PC-3 (cell line): ENCODE measurements at regions of chr16 and their contacts with region 1.

Region 1: DNA sequence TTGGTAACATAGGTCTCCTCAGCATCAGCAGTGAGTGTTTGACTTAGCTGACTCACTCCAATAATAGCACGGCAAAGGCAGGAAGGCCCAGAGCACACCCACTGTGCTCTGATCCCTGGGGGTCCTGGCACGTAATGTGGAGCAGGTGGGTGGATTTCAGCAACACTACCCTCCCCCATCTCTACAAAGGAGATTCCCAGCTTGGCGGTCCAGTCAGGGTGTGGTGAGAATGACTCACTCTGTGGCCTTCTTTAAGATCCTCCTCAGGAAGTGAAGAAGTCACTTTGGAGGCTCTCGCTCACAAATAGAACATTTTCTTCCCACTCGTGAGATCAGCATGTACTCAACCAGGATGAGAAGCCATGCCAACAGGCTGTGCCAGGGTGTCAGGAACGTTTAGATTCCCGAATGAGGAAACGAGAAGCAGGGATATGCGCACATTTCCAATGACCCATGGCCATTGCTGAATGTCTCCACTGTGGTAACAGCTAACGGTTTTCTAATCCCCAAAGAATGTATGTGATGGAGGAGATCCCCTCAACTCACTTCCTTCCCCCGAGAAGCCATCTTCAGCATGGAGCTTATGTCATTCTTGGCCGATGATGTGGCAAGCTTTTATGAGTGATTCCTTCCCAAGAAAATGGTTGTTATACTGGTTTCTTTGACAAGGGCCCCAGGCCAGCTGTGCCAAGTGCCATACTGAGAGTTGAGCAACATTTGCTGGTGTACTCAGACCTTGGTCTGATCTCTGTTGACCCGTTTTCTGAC is 365.2 kb downstream of the C16orf95 start:
- DNase-seq: peak; percentile 93
- ATAC-seq: peak; percentile 79
- H3K4me3 ChIP-seq: peak overlapping the region; percentile 30; the same call in 1 of the 2 replicates
- H3K27ac ChIP-seq: peak overlapping the region; percentile 99
- H3K4me1 ChIP-seq: peaks cover 28% of the 10 kb centered on the region
- H3K27me3 ChIP-seq: no peaks in the 10 kb centered on the region
- CTCF ChIP-seq: no peak

Region 2: DNA sequence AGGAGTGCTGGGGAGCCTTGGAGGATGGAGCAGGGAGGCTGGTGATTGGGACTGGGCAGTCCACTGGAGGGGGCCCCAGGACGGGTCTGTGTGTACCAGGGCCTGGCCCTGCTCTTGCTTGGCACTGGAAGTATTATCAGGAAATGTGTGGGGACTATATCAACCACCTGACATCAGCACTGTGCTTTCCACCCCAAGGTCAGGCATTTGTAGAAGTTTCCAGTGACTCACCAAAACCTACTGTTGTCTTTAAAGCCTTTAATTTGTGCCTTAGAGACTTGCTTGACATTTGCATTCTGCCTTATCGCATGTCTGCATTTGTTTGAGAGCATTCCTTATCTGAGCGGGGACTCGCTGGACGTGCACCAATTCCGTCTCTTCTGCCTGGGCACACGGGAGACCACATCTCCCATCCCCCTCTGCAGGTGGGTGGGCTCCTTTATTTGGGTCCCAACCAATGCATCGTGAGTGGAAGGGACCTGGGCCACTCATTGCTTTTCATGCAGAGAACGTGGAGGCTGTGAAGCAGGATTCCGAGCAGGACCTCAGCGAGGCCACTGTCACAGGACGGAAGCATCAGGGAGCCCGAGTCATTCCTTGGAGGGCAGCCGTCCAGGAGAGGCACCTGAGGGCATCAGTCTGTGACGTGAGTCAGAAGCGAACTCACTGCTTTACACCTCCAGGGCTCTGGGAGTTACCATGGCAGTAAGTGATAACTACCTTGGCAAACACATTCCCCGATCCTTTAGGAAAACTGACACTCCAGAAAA is 50.3 kb before region 1 on chr16:
- CTCF ChIA-PET with region 1: no interaction called
- POLR2A ChIA-PET with region 1: no interaction called
- intact Hi-C with region 1: loop called (anchors 2 kb)
- DNase-seq: peak; percentile 89
- ATAC-seq: peak; percentile 75
- H3K4me3 ChIP-seq: 0 out of 2 replicates have a peak overlapping the region, but pooled peaks have one; percentile 44
- H3K27ac ChIP-seq: peak overlapping the region; percentile 98
- H3K4me1 ChIP-seq: peaks cover 39% of the 10 kb centered on the region
- H3K27me3 ChIP-seq: no peaks in the 10 kb centered on the region
- CTCF ChIP-seq: peak; percentile 39; the same call in 1 of the 2 replicates